ENCODE measurements at regions of chr18 and their contacts with region 1.

Region 1: GRCh38 chr18:45974088-45974536 is 7.0 kb upstream of the EPG5 start:
- DNase-seq: peak; percentile 86
- ATAC-seq: peak; percentile 89
- H3K4me3 ChIP-seq: no peak overlapping the region
- H3K27ac ChIP-seq: no peak overlapping the region
- H3K4me1 ChIP-seq: no peaks in the 10 kb centered on the region
- H3K27me3 ChIP-seq: no peaks in the 10 kb centered on the region
- CTCF ChIP-seq: peak; percentile 90
- POLR2A ChIP-seq: peak; percentile 46; the same call in 1 of the 2 replicates
- RAD21 ChIP-seq: peak; percentile 96

Region 2: GRCh38 chr18:45621061-45621511 is 353.0 kb before region 1 on chr18:
- CTCF ChIA-PET with region 1: no interaction called
- POLR2A ChIA-PET with region 1: no interaction called
- dilution Hi-C with region 1: no loop called
- in situ Hi-C with region 1: no loop called
- intact Hi-C with region 1: loop called (anchors 1 kb)
- DNase-seq: peak; percentile 44
- ATAC-seq: peak; percentile 78
- H3K4me3 ChIP-seq: no peak overlapping the region
- H3K27ac ChIP-seq: no peak overlapping the region
- H3K4me1 ChIP-seq: peaks cover 5% of the 10 kb centered on the region; the same call in 1 of the 2 replicates
- H3K27me3 ChIP-seq: peaks cover 31% of the 10 kb centered on the region
- CTCF ChIP-seq: peak; percentile 83
- POLR2A ChIP-seq: no peak
- RAD21 ChIP-seq: peak; percentile 67

Region 3: GRCh38 chr18:45664824-45665763 is 309.0 kb before region 1 on chr18:
- CTCF ChIA-PET with region 1: interaction called, 3 read pairs
- POLR2A ChIA-PET with region 1: no interaction called
- dilution Hi-C with region 1: no loop called
- in situ Hi-C with region 1: no loop called
- intact Hi-C with region 1: loop called (anchors 1 kb)
- DNase-seq: peak; percentile 68
- ATAC-seq: peak; percentile 81
- H3K4me3 ChIP-seq: no peak overlapping the region
- H3K27ac ChIP-seq: no peak overlapping the region
- H3K4me1 ChIP-seq: peaks cover 8% of the 10 kb centered on the region
- H3K27me3 ChIP-seq: no peaks in the 10 kb centered on the region
- CTCF ChIP-seq: peak; percentile 94
- POLR2A ChIP-seq: peak; percentile 39; the same call in 1 of the 2 replicates
- RAD21 ChIP-seq: peak; percentile 96

Region 4: DNA sequence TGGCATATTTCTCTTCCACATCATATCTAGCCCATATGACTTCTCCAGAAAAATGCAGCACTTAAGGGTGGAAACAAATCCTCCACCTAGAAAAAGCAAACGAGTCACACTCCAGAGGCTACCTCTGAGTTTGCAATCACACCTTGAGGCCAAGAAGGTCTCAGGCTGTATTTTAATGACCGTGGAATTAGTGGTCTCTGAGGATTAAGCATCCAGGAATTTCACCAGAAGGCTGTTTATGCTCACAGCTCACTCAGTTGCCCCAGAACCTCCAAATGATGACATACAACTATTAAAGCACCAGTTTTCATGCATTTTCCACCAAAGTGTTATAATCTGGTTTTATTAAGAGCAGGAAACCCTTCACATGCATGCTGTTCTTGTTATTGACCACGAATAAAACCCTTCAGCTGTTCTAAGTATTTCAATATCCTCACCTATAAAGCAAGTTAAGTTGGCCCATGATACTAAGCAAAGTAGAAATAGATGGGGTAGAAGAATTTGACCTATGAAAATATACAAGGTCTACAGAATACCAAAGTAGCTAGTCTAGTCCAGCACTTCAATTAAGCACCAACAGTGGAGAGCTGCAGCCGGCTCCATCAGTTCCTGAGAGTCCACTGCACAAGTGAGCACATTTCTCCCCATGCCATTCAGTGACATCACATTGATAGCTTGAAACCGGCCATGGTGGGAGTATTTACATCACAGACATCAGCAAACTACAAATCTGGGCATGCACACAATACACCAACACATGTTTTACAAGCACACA is 289.6 kb before region 1 on chr18:
- CTCF ChIA-PET with region 1: no interaction called
- POLR2A ChIA-PET with region 1: no interaction called
- dilution Hi-C with region 1: no loop called
- in situ Hi-C with region 1: no loop called
- intact Hi-C with region 1: loop called (anchors 5 kb)
- DNase-seq: peak; percentile 78
- ATAC-seq: peak; percentile 62
- H3K4me3 ChIP-seq: no peak overlapping the region
- H3K27ac ChIP-seq: no peak overlapping the region; the same call in 1 of the 2 replicates
- H3K4me1 ChIP-seq: peaks cover 27% of the 10 kb centered on the region
- H3K27me3 ChIP-seq: no peaks in the 10 kb centered on the region
- CTCF ChIP-seq: no peak
- POLR2A ChIP-seq: no peak
- RAD21 ChIP-seq: no peak

Region 5: DNA sequence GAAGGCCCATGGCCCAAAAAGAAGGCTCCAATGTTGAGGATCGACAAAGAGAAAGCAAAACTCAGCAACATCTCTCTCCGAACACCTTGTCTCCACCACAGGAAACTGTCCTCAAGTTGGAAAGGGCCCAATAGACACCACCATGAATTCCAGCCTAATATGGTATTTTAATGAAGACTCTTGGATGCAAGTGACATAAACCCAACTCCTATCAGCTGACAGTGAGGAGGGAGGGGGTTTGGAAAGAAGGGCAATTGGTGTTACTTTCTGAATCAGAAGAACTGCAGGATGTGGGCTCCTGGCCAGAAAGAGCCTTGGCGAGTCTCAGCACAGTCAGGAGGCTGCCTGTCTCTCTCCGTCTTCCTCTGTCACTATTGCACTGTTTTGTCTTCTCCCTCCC is 189.0 kb before region 1 on chr18:
- CTCF ChIA-PET with region 1: interaction called, 5 read pairs
- POLR2A ChIA-PET with region 1: interaction called, 26 read pairs
- dilution Hi-C with region 1: no loop called
- in situ Hi-C with region 1: no loop called
- intact Hi-C with region 1: no loop called
- DNase-seq: peak; percentile 52
- ATAC-seq: no peak
- H3K4me3 ChIP-seq: no peak overlapping the region
- H3K27ac ChIP-seq: peak overlapping the region; percentile 67
- H3K4me1 ChIP-seq: peaks cover 30% of the 10 kb centered on the region
- H3K27me3 ChIP-seq: no peaks in the 10 kb centered on the region
- CTCF ChIP-seq: no peak
- POLR2A ChIP-seq: no peak
- RAD21 ChIP-seq: no peak

Region 6: GRCh38 chr18:45920367-45920766 is 53.7 kb before region 1 on chr18:
- CTCF ChIA-PET with region 1: interaction called, 7 read pairs
- POLR2A ChIA-PET with region 1: no interaction called
- dilution Hi-C with region 1: no loop called
- in situ Hi-C with region 1: no loop called
- intact Hi-C with region 1: loop called (anchors 2 kb)
- DNase-seq: peak; percentile 62
- ATAC-seq: no peak
- H3K4me3 ChIP-seq: no peak overlapping the region
- H3K27ac ChIP-seq: no peak overlapping the region
- H3K4me1 ChIP-seq: peaks cover 2% of the 10 kb centered on the region; the same call in 1 of the 2 replicates
- H3K27me3 ChIP-seq: no peaks in the 10 kb centered on the region
- CTCF ChIP-seq: no peak
- POLR2A ChIP-seq: no peak
- RAD21 ChIP-seq: no peak

Region 7: GRCh38 chr18:46073474-46074331 is 99.6 kb after region 1 on chr18:
- CTCF ChIA-PET with region 1: interaction called, 6 read pairs
- POLR2A ChIA-PET with region 1: no interaction called
- dilution Hi-C with region 1: no loop called
- in situ Hi-C with region 1: loop called (anchors 5 kb)
- intact Hi-C with region 1: loop called (anchors 2 kb)
- DNase-seq: peak; percentile 69
- ATAC-seq: peak; percentile 52
- H3K4me3 ChIP-seq: no peak overlapping the region
- H3K27ac ChIP-seq: no peak overlapping the region
- H3K4me1 ChIP-seq: peaks cover 20% of the 10 kb centered on the region
- H3K27me3 ChIP-seq: no peaks in the 10 kb centered on the region
- CTCF ChIP-seq: peak; percentile 76
- POLR2A ChIP-seq: no peak
- RAD21 ChIP-seq: peak; percentile 82

Region 8: DNA sequence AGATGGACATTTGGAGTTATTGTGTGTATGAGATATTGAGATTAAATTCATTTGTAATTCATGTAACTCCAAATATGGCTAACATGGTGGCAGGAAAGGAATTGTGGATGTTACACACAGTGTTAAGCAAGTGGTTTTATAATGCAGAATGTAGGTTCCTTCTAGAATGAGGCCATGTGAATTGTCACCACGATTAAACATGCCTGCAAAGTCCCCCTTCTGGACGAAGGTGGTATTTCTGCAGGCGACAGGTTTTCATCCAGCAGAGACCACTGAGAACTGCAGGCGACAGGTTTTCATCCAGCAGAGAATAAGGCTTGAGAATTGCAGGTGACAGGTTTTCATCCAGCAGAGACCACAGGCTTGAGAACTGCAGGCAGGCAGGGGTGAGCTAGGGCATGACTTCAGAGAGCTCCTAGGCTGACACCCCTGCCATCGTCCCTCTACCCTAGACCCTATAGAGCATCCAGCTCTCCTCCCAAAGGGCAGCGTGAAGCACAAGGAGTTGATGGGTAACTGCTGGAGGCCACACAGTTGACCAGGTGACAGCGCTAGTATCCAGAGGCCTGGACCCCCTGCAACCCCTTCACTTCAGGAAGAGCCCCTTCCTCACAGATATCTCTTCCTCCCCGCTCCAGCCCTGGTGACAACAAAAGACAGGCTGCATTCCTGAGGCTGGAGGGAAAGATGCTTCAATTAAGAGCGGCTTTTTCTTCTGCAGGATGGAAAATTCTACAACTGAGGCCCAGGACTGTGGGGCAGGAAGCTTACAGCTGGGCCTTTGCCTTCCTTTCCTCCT is 507.1 kb after region 1 on chr18:
- CTCF ChIA-PET with region 1: no interaction called
- POLR2A ChIA-PET with region 1: no interaction called
- dilution Hi-C with region 1: no loop called
- in situ Hi-C with region 1: no loop called
- intact Hi-C with region 1: no loop called
- DNase-seq: peak; percentile 52
- ATAC-seq: peak; percentile 75
- H3K4me3 ChIP-seq: no peak overlapping the region
- H3K27ac ChIP-seq: no peak overlapping the region
- H3K4me1 ChIP-seq: no peaks in the 10 kb centered on the region
- H3K27me3 ChIP-seq: no peaks in the 10 kb centered on the region; the same call in 1 of the 2 replicates
- CTCF ChIP-seq: peak; percentile 65
- POLR2A ChIP-seq: no peak
- RAD21 ChIP-seq: peak; percentile 69